ENCODE measurements at regions of chr16 and their contacts with region 1.

Region 1: DNA sequence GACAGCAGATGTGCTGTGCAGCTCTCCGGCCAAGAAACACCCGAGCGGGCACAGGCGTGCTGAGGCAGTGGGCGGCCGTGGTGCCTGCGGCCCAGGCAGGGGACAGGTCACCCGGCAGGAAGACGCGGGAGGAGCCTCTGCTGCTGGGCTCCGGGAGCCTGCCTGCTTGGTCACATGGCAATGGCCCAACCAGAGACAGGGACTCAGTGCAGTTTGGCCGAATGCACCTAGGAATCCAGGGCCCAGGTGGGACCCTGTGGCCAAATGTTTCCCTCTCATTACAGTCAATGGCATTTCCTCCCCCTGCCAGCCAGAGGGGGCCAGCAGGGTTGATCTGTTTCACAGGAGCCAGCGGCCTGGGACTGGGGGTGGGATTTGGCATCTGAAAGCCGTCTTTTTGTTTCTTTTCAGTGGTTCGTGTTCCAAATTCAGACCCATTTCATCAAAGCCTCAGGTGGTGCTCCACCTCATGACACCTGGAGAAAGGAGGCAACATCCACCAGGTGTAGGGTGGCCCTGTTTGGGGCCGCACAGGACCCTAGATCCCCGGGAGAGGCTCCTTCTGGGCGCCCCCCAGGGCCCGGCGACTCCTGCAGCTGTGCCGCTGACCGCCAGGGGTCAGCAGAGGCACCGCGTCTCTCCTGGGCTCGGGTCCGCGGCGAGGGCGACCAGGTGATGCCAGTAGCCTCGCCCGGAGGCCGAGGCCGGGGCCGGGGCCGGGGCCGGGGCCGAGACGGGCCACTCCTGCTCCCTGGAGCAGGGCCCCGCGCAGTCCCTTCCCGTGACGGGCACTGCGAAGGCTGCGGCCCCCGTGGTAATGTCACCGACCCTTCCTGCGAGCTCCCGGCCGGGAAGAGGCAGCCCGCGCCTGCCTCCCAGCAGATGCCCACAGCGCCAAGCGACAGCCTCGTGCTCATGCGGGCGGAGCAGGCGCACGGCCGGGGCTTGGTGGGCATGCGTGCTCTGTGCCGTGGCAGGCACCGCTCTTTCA is 118.5 kb downstream of the C16orf78 start:
- DNase-seq: peak; percentile 66
- ATAC-seq: peak; percentile 87

Region 2: DNA sequence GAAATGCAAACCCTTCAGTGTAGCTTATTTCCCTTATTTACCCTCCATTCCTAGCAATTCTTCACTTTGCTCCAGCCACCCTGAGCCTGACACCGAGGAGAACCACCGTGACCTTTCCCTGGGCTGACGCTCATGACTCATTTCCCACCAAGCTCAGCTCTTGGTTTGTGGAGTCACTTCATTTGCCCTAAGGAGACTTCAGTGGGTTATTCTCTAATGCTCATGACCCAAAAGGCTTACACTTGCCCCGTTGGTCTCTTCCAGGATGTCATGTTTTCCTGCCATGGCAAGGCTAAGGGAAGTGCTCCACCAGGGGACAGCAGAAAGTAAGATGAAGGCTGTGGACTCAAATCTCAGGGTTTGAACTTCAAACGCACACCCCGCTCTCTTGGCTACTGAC is 371.4 kb before region 1 on chr16:
- intact Hi-C with region 1: no loop called
- DNase-seq: no peak
- ATAC-seq: no peak

Region 3: GRCh38 chr16:49592546-49593423 is 100.7 kb after region 1 on chr16:
- intact Hi-C with region 1: loop called (anchors 5 kb)
- DNase-seq: no peak
- ATAC-seq: peak; percentile 70

Region 4: DNA sequence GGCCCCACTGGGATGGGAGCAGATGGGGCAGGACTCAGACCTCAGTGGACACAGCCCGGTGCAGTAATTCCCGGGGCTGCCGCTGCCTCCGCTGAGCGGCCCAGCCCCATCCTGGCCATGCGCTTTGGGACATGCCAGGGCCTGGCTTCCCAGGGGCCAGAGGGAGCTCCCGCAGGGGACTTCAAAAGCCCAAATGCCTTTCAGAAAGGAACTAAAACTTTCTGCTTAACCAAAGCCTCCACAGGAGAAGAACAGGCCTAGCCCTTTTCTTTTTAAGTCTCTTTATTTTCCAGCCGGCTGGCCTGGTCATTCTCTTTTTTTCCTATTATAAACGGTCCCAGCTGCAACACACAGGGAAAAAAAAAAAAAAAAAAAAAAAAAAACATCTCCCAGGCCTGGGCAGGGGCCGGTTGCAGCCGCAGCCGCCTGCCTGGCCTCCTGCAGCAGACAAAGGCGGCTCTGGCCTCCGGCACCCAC is 374.6 kb after region 1 on chr16:
- intact Hi-C with region 1: loop called (anchors 10 kb)
- DNase-seq: no peak
- ATAC-seq: no peak